GM12878 (cell line): ENCODE measurements at regions of chr20 and their contacts with region 1.

Region 1: DNA sequence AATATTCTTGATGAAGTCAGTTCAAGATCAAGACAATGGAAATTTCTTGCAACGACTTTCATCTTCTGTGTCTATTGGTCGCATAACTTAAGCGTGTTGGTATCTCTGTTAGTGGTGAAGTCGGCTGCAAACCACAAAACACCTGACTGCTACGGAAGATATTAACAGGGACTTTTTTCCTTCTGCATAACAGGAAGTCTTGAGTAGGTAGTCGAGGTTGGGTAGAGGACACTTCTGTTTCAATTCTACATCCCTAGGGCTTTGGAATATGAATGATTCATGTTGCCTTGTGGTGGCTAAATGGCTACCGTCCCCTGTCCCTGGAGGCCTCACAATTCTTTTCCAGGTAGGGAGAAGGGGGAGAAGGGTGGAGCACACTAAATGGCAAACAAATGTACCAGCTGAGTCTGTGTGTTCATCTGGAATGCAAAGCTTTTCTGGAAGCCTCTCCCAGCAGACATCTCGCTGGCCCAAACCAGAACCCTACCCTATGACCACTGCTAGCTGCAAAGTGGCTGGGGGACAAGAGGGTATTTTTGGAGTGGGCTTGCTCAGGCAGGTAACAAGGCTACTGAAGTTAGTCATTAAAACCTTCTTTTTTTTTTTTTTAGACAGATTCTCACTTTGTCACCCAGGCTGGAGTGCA is 34.6 kb upstream of the NKX2-2 start:
- DNase-seq: peak; percentile 46
- ATAC-seq: peak; percentile 86
- H3K4me3 ChIP-seq: no peak overlapping the region
- H3K27ac ChIP-seq: no peak overlapping the region
- H3K4me1 ChIP-seq: peaks cover 4% of the 10 kb centered on the region
- H3K27me3 ChIP-seq: peaks cover 0 to 2% of the 10 kb centered on the region in 2 experiments; a peak in 1 of 4 replicates
- CTCF ChIP-seq: no peak
- EP300 ChIP-seq: peak in 1 of 2 experiments; percentile 43; a peak in 2 of 4 replicates
- POLR2A ChIP-seq: no peak
- RAD21 ChIP-seq: no peak

Region 2: GRCh38 chr20:21228511-21228910 is 320.0 kb before region 1 on chr20:
- CTCF ChIA-PET with region 1: no interaction called
- POLR2A ChIA-PET with region 1: no interaction called
- RAD21 ChIA-PET with region 1: no interaction called
- SMC1A ChIA-PET with region 1: no interaction called
- in situ Hi-C with region 1: no loop called
- intact Hi-C with region 1: no loop called
- DNase-seq: peak; percentile 17
- ATAC-seq: peak; percentile 97
- H3K4me3 ChIP-seq: no peak overlapping the region
- H3K27ac ChIP-seq: no peak overlapping the region
- H3K4me1 ChIP-seq: peaks cover 10% of the 10 kb centered on the region
- H3K27me3 ChIP-seq: no peaks in the 10 kb centered on the region
- CTCF ChIP-seq: no peak
- EP300 ChIP-seq: 0 out of 4 replicates have a peak, but pooled peaks of 1 of the 2 experiments have one; percentile 8
- POLR2A ChIP-seq: no peak
- RAD21 ChIP-seq: no peak

Region 3: DNA sequence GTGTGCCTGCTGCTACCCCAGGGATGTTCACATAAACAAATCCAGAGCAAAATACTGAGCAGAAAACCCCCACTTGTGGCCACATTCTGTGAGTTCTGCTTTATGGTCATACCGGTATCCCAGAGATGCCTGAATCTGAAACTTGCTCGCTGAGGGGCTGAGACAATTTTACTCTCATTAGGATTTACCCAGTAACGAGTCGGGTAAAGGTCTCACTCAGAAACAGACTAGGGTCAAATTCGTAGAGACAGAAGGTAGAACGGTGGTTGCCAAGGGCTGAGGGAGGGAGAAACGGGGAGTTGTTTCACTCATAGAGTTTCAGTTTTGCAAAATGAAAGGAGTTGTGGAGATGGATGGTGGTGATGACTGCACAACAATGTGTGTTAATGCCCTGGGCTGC is 10.8 kb after region 1 on chr20:
- CTCF ChIA-PET with region 1: interaction called, 43 read pairs
- POLR2A ChIA-PET with region 1: interaction called, 40 read pairs
- RAD21 ChIA-PET with region 1: interaction called, 43 read pairs
- SMC1A ChIA-PET with region 1: interaction called, 131 read pairs
- in situ Hi-C with region 1: no loop called
- intact Hi-C with region 1: no loop called
- DNase-seq: peak; percentile 48
- ATAC-seq: peak; percentile 85
- H3K4me3 ChIP-seq: 0 out of 2 replicates have a peak overlapping the region, but pooled peaks have one; percentile 17
- H3K27ac ChIP-seq: no peak overlapping the region
- H3K4me1 ChIP-seq: peaks cover 4% of the 10 kb centered on the region; the same call in 1 of the 2 replicates
- H3K27me3 ChIP-seq: no peaks in the 10 kb centered on the region
- CTCF ChIP-seq: no peak
- EP300 ChIP-seq: no peak
- POLR2A ChIP-seq: no peak
- RAD21 ChIP-seq: no peak

Region 4: DNA sequence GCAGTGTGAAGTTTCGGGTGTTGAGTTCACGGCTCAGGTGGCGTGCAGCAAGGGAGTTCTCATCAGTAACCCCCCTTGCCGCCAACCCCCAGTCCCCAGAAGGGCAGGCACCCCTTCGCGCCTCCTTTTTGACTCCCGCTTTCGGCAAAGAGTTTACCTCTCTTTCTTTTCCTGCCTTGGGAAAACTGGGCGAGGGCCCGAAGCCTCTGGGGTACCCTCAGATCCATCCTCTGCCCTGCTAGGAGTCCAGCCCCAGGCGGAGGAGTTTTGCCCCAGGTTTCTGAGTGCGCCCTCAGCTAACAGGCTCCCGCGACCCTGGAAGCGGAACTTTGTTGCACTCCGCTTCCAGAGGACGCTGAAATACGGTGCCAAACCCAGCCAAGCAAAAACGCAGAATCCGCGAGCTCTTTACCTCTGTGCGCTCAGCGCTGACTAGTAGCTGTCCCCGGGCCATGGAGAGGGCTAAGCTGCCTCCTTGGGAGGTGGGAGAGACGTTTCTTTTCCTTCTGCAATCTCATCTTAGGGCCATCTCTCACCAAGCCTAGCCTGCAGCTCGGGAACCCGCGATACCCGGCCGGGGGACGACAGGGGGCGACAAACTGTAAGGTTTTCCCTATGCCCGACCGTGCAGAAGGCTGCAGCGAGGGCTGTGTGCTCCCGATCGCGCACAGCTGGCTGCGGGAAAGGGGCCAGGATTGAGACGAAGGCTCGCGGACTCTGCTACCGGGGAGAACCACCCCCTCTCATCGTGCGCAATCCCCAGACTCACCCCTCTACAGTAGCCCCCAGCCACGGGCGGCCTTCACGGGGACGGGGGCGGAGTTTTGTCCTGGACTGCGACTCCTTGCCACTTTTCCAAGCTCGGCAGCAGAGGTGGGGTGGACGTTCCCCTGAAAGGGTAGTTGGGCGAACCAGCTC is 154.3 kb after region 1 on chr20:
- CTCF ChIA-PET with region 1: no interaction called
- POLR2A ChIA-PET with region 1: no interaction called
- RAD21 ChIA-PET with region 1: no interaction called
- SMC1A ChIA-PET with region 1: no interaction called
- in situ Hi-C with region 1: no loop called
- intact Hi-C with region 1: no loop called
- DNase-seq: no peak
- ATAC-seq: peak; percentile 88
- H3K4me3 ChIP-seq: no peak overlapping the region
- H3K27ac ChIP-seq: no peak overlapping the region
- H3K4me1 ChIP-seq: no peaks in the 10 kb centered on the region
- H3K27me3 ChIP-seq: peaks cover 10 to 18% of the 10 kb centered on the region in 2 experiments
- CTCF ChIP-seq: peak; percentile 33 to 52 (median 40); a peak in 5 of 6 replicates
- EP300 ChIP-seq: no peak
- POLR2A ChIP-seq: no peak
- RAD21 ChIP-seq: no peak